Calu3 (cell line): ENCODE measurements at regions of chr10 and their contacts with region 1.

Region 1: GRCh38 chr10:71319042-71319799 is at the start of gene SLC29A3:
- DNase-seq: peak; percentile 88
- H3K4me3 Mint-ChIP-seq: peak within 1 kb of the TSS; percentile 86
- H3K27ac Mint-ChIP-seq: peak within 1 kb of the TSS; percentile 6
- H3K4me1 Mint-ChIP-seq: no peaks in the 10 kb centered on the region
- H3K27me3 Mint-ChIP-seq: peaks cover under 1% of the 10 kb centered on the region
- CTCF ChIP-seq: peak; percentile 60
- total RNA-seq, gene SLC29A3: 5.9 and 7.7 TPM in 2 replicates

Region 2: DNA sequence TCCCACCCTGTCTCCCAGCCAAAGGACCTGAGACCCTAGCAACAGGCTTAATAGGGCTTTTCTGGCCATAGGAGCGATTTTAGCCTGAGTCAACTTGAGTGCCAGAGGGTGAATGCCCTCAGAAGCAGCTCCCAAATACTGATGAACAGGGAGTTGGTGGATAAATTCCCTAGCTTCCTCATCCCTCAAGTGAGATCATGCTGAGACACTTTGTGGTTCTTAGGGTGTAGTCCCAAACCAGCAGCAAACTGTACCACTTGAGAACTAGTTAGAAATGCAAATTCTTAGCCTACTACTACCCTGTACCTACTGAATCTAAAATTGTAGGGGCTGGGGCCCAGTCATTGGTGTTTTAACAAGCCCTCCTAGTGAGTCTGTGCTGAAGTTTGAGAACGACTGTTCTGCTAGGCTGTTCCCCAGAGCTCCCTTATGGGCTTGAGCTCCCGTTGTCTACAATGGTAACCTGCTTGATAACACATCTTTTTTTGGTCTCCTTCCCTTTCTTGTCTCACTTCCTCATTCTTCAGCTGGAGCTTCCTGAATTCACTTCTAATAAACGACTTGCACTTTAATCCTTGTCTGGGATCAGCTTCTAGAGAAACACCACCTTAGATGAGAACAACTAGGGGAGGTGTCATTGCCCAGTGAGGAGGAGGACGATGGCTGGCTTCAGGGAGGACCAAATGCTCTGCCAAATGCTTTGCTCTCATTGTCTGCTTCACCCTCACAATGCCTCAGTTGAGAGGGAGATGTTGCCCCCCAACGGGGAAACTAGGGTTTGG is 59.3 kb after region 1 on chr10:
- CTCF ChIA-PET with region 1: interaction called, 27 read pairs
- intact Hi-C with region 1: loop called (anchors 2 kb)
- DNase-seq: no peak
- H3K4me3 Mint-ChIP-seq: no peak overlapping the region
- H3K27ac Mint-ChIP-seq: no peak overlapping the region
- H3K4me1 Mint-ChIP-seq: peaks cover 17% of the 10 kb centered on the region
- H3K27me3 Mint-ChIP-seq: no peaks in the 10 kb centered on the region
- CTCF ChIP-seq: no peak

Region 3: DNA sequence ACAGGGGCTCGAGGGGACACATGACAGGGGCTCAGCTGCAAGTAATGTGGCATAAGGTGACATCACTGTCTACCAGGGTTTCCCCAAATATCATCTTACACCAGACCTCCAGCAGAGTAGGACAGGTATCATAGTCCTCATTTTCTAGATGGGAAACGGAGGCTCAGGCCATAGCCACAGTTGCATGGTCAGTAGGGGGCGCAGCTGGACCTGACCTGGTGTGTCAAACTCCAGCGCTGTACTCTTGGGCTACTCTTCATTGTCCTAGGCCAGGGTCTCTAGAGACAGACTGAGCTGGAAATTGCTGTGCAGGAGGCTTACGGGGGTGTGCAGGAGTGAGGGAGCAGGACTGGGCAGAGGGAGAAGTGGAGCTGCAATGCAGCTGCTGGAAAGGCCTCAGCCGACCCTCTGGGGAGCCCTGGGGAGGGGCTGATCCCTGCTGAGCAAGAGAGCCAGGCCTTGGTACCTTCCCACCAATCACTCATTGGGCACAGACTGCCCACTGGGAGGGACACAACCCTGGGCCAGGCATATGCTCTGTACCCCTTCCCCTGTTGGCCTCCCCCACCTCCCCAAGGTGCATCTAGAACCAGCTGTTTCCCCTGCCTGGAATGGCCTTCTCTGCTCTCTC is 167.4 kb after region 1 on chr10:
- CTCF ChIA-PET with region 1: interaction called, 4 read pairs
- intact Hi-C with region 1: loop called (anchors 10 kb)
- DNase-seq: peak; percentile 83
- H3K4me3 Mint-ChIP-seq: no peak overlapping the region
- H3K27ac Mint-ChIP-seq: no peak overlapping the region
- H3K4me1 Mint-ChIP-seq: no peaks in the 10 kb centered on the region
- H3K27me3 Mint-ChIP-seq: peaks cover 96% of the 10 kb centered on the region
- CTCF ChIP-seq: peak; percentile 71